Endothelial cell of umbilical vein (primary cell): ENCODE measurements at regions of chr1 and their contacts with region 1.

Region 1: GRCh38 chr1:112395821-112396652 is at the start of gene CTTNBP2NL:
- DNase-seq: peak; percentile 95
- H3K4me3 ChIP-seq: peak within 1 kb of the TSS; percentile 86 to 94 (median 91)
- H3K27ac ChIP-seq: peak within 1 kb of the TSS; percentile 97
- H3K4me1 ChIP-seq: peaks cover 64% of the 10 kb centered on the region
- H3K27me3 ChIP-seq: no peaks in the 10 kb centered on the region
- CTCF ChIP-seq: no peak
- POLR2A ChIP-seq: peak; percentile 91
- total RNA-seq, gene CTTNBP2NL: 94.4 and 96.4 TPM in 2 replicates

Region 2: DNA sequence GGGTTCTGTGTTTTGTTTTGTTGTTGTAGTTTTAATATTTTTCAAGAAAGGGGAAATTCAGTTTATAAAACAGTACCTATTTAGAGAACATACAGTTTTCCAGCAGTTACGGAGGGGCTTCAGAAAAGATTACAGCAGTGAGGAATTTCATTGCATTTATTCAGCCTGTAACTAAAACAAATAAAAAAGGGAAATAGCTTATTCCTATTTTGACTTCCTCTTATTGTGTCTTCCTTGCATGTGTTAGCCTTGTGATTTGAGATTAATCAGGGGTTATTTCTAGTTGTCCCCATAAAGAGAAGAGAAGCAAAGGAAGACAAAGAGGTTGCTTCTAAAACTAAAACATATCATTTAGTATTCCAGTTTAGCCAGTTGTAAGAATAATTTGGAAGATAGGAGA is 35.0 kb after region 1 on chr1:
- CTCF ChIA-PET with region 1: interaction called, 22 read pairs
- POLR2A ChIA-PET with region 1: interaction called, 4 read pairs
- dilution Hi-C with region 1: no loop called
- intact Hi-C with region 1: loop called (anchors 1 kb)
- DNase-seq: peak; percentile 78
- H3K4me3 ChIP-seq: peak overlapping the region in 1 of 3 experiments; percentile 37
- H3K27ac ChIP-seq: peak overlapping the region; percentile 95
- H3K4me1 ChIP-seq: peaks cover 73% of the 10 kb centered on the region
- H3K27me3 ChIP-seq: no peaks in the 10 kb centered on the region
- CTCF ChIP-seq: no peak
- POLR2A ChIP-seq: no peak

Region 3: GRCh38 chr1:112444269-112444668 is 48.2 kb after region 1 on chr1:
- CTCF ChIA-PET with region 1: interaction called, 12 read pairs
- POLR2A ChIA-PET with region 1: interaction called, 6 read pairs
- dilution Hi-C with region 1: no loop called
- intact Hi-C with region 1: loop called (anchors 1 kb)
- DNase-seq: peak; percentile 84
- H3K4me3 ChIP-seq: no peak overlapping the region
- H3K27ac ChIP-seq: peak overlapping the region; percentile 95
- H3K4me1 ChIP-seq: peaks cover 45% of the 10 kb centered on the region
- H3K27me3 ChIP-seq: no peaks in the 10 kb centered on the region
- CTCF ChIP-seq: no peak
- POLR2A ChIP-seq: no peak

Region 4: GRCh38 chr1:112660072-112660471 is 264.0 kb after region 1 on chr1:
- CTCF ChIA-PET with region 1: interaction called, 3 read pairs
- POLR2A ChIA-PET with region 1: interaction called, 10 read pairs
- dilution Hi-C with region 1: no loop called
- intact Hi-C with region 1: no loop called
- DNase-seq: no peak
- H3K4me3 ChIP-seq: no peak overlapping the region
- H3K27ac ChIP-seq: no peak overlapping the region
- H3K4me1 ChIP-seq: no peaks in the 10 kb centered on the region
- H3K27me3 ChIP-seq: no peaks in the 10 kb centered on the region
- CTCF ChIP-seq: no peak
- POLR2A ChIP-seq: no peak

Region 5: GRCh38 chr1:112674439-112674985 is 278.5 kb after region 1 on chr1 and contains the start of gene MOV10:
- CTCF ChIA-PET with region 1: interaction called, 53 read pairs
- POLR2A ChIA-PET with region 1: interaction called, 3 read pairs
- dilution Hi-C with region 1: no loop called
- intact Hi-C with region 1: loop called (anchors 1 kb)
- DNase-seq: peak; percentile 81
- H3K4me3 ChIP-seq: peak within 1 kb of the TSS; percentile 67 to 88 (median 82)
- H3K27ac ChIP-seq: peak within 1 kb of the TSS; percentile 69
- H3K4me1 ChIP-seq: peaks cover 21% of the 10 kb centered on the region
- H3K27me3 ChIP-seq: no peaks in the 10 kb centered on the region
- CTCF ChIP-seq: no peak
- POLR2A ChIP-seq: peak; percentile 56
- total RNA-seq, gene MOV10: 103 and 113 TPM in 2 replicates

Region 6: GRCh38 chr1:112706908-112707663 is 311.0 kb after region 1 on chr1 and contains the start of gene RHOC:
- CTCF ChIA-PET with region 1: interaction called, 16 read pairs
- POLR2A ChIA-PET with region 1: interaction called, 5 read pairs
- dilution Hi-C with region 1: no loop called
- intact Hi-C with region 1: loop called (anchors 1 kb)
- DNase-seq: peak; percentile 88
- H3K4me3 ChIP-seq: peak within 1 kb of the TSS; percentile 81 to 90 (median 89)
- H3K27ac ChIP-seq: peak within 1 kb of the TSS; percentile 88
- H3K4me1 ChIP-seq: peaks cover 40% of the 10 kb centered on the region
- H3K27me3 ChIP-seq: no peaks in the 10 kb centered on the region
- CTCF ChIP-seq: peak; percentile 97 to 98
- POLR2A ChIP-seq: peak; percentile 83
- total RNA-seq, gene RHOC: 652 and 699 TPM in 2 replicates